Activated CD8-positive, alpha-beta T cell treated with anti-CD3 and anti-CD28 coated beads, Interleukin-2, amount 10 ng/mL, durations not matched to agents 7 days and 5 days (primary cell): ENCODE measurements at regions of chr2 and their contacts with region 1.

Region 1: DNA sequence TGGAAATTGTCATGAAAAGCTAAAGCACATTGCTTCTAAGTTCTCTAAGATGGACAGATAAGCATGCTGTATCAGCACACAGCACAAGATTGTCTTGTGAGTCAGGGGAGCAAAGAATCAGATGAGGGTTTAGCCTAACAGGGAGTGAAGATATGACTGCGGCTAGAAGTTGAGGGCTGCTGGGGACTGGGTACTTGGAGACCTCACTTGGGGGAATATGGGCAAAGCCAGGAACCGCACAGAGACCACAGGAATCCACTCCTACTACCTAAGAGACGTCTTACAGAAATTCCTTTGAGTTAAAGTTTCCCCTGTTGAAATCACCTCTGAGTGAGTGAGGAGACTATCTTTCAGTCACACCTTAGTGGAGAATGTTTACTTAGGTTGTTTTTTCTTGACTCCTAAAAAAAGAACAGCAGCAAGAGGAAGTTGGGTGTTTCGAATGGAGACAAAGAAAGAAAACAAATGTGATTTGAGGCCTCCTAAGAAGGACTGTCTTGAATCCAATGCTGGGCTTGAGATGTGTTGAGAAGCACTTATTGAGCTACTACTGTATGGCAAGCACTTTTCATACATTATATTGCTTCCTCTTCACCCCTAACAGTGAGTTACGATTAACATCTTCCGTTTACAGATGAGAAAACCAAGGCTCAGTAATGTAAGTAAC is 100.7 kb downstream of the ANKRD44 start:
- DNase-seq: peak; percentile 56
- ATAC-seq: peak; percentile 56
- H3K4me3 Mint-ChIP-seq: peak overlapping the region; percentile 48
- H3K27ac Mint-ChIP-seq: peak overlapping the region; percentile 87
- H3K4me1 Mint-ChIP-seq: peaks cover 98% of the 10 kb centered on the region
- H3K27me3 Mint-ChIP-seq: no peaks in the 10 kb centered on the region

Region 2: GRCh38 chr2:197198890-197199289 is 11.0 kb before region 1 on chr2:
- CTCF ChIA-PET with region 1: interaction called, 79 read pairs
- POLR2A ChIA-PET with region 1: interaction called, 9 read pairs
- DNase-seq: peak; percentile 97
- ATAC-seq: peak; percentile 82
- H3K4me3 Mint-ChIP-seq: peak overlapping the region; percentile 81
- H3K27ac Mint-ChIP-seq: peak overlapping the region; percentile 93
- H3K4me1 Mint-ChIP-seq: peaks cover 89% of the 10 kb centered on the region
- H3K27me3 Mint-ChIP-seq: no peaks in the 10 kb centered on the region

Region 3: DNA sequence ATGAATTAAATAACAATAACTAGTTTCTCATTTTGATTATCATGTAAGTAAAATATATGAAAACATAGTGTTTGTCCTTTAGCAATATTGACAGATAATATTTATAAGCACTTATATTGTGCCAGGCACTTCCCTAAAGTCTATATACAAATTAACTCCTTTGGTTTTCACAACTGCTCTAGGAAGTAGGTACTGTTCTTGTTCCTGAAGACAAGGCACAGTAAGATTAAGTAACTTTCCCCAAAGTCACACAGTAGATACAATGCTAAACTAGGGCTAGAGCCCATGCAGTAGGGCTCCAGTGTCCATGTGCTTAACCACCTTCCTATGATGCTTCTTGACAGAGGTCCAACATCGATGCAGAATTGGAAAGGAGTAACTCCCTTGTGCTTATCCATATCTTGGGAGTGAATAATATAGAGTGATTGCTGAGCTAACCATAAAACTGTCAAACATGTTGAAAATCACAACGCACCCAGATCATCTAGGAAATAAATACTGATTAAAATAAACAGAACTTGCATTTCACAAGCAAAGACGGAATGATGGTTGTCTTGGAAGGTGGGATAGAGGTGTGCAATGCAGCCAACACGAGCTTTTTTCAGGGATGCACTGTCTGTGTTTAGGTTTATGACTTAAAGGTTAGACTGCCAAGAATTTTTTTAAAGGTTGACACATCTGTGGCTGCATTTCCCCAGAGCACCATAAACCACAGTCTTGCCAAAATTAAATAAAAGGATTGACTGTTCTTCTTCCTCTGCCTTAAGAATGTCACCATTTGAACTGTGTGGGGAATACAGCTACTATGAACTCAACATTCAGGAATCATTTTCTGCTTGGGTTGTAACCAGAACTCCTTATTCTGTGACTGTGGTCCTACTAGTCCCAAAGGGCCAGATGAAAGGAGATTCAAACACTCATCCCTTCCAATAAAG is 19.9 kb after region 1 on chr2:
- CTCF ChIA-PET with region 1: interaction called, 10 read pairs
- POLR2A ChIA-PET with region 1: interaction called, 5 read pairs
- DNase-seq: no peak
- ATAC-seq: no peak
- H3K4me3 Mint-ChIP-seq: no peak overlapping the region
- H3K27ac Mint-ChIP-seq: peak overlapping the region; percentile 56
- H3K4me1 Mint-ChIP-seq: peaks cover 70% of the 10 kb centered on the region
- H3K27me3 Mint-ChIP-seq: no peaks in the 10 kb centered on the region

Region 4: DNA sequence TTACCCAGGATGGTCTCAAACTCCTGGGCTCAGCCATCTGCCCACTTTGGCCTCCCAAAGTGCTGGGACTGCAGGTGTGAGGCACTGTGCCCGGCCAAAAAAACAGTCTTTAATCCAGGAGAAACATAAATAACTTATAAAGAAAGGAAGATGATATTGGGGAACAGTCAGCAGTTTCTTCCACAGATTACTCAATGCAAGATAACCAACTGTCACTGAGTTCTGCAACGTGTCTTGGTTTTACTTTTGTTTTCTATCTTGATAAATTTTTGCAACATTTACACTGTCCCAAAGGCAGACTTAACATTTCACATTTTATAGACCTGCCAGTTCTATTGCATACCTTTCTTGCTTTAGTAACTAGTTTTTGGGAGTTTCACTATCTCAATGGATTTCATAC is 29.6 kb after region 1 on chr2:
- CTCF ChIA-PET with region 1: interaction called, 17 read pairs
- POLR2A ChIA-PET with region 1: interaction called, 22 read pairs
- DNase-seq: no peak
- ATAC-seq: peak; percentile 57
- H3K4me3 Mint-ChIP-seq: peak overlapping the region; percentile 77
- H3K27ac Mint-ChIP-seq: peak overlapping the region; percentile 91
- H3K4me1 Mint-ChIP-seq: peaks cover 83% of the 10 kb centered on the region
- H3K27me3 Mint-ChIP-seq: no peaks in the 10 kb centered on the region

Region 5: GRCh38 chr2:197255543-197255942 is 45.7 kb after region 1 on chr2:
- CTCF ChIA-PET with region 1: interaction called, 8 read pairs
- POLR2A ChIA-PET with region 1: interaction called, 10 read pairs
- DNase-seq: peak; percentile 84
- ATAC-seq: peak; percentile 94
- H3K4me3 Mint-ChIP-seq: peak overlapping the region; percentile 77
- H3K27ac Mint-ChIP-seq: peak overlapping the region; percentile 92
- H3K4me1 Mint-ChIP-seq: peaks cover 78% of the 10 kb centered on the region
- H3K27me3 Mint-ChIP-seq: no peaks in the 10 kb centered on the region

Region 6: DNA sequence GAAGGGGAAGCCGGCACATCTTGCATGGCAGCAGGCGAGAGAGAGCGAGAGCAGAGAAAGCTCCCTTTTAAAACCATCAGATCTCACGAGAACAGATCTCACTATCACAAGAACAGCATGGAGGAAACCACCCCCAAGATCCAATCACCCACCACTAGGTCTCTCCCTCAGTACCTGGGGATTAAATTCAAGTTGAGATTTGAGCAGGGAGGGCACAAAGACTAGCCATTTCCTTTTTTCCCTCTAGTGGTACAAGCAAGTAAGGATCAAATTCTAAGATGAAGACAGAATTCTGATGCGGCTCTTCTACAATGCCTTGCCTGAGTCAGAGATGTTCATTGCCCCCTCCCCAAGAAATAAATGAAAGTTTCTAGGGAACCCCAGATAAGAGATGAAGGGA is 146.3 kb after region 1 on chr2:
- CTCF ChIA-PET with region 1: no interaction called
- POLR2A ChIA-PET with region 1: no interaction called
- DNase-seq: no peak
- ATAC-seq: peak; percentile 45
- H3K4me3 Mint-ChIP-seq: no peak overlapping the region
- H3K27ac Mint-ChIP-seq: no peak overlapping the region
- H3K4me1 Mint-ChIP-seq: peaks cover 18% of the 10 kb centered on the region
- H3K27me3 Mint-ChIP-seq: no peaks in the 10 kb centered on the region